Heart left ventricle (tissue), 16 donors: ENCODE measurements at regions of chr9 and their contacts with region 1.

Region 1: GRCh38 chr9:109903515-109904138 is 123.6 kb downstream of the PALM2AKAP2 start:
- DNase-seq: peak in 4 of 5 donors; percentile 47 to 64 (median 60)
- ATAC-seq: peak; percentile 24 to 66 (median 42)
- H3K4me3 ChIP-seq: no peak overlapping the region
- H3K27ac ChIP-seq: peak overlapping the region in 1 of 12 donors; percentile 3
- H3K4me1 ChIP-seq: peaks cover 9 to 68% (median 29%) of the 10 kb centered on the region in 12 donors
- H3K27me3 ChIP-seq: no peaks in the 10 kb centered on the region
- CTCF ChIP-seq: peak; percentile 63 to 90 (median 82)
- POLR2A ChIP-seq: no peak

Region 2: DNA sequence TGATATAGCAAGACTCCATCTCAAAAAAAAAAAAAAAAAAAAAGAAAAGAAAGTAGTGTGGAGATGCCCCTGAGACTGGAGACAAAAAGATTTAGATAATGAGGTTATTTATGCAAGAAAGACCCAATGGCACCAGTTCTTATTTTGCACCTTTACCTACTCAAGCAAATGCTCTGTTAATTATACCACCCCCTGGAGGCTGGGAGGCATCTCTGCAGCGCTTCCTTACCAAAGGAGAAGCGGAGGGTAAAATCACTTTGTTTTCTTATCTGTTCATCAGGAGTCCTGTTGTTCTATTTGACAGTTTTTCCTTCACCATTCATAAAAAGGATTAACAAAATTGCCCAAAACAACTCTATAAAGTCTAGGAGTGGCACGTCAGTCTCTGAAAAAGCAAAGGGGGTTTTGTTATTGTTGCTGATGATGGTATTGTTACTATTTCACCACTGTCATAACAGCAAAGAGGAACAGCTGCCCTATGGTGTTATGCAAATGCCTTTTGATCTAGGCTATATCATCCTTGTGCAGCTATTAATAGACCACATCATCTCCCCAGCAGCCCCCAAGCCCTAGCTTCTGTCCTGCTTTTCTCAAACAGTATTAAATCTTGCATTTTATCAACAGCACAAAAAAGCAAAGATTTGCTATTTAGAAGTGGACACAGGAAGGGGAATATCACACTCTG is 50.3 kb after region 1 on chr9:
- intact Hi-C with region 1: loop called in 1 of 10 experiments (anchors 5 kb)
- DNase-seq: no peak
- ATAC-seq: no peak
- H3K4me3 ChIP-seq: no peak overlapping the region
- H3K27ac ChIP-seq: no peak overlapping the region
- H3K4me1 ChIP-seq: peaks cover 0 to 25% (median 9%) of the 10 kb centered on the region in 12 donors
- H3K27me3 ChIP-seq: no peaks in the 10 kb centered on the region
- CTCF ChIP-seq: peak in 3 of 12 donors; percentile 11 to 23 (median 17)
- POLR2A ChIP-seq: no peak

Region 3: DNA sequence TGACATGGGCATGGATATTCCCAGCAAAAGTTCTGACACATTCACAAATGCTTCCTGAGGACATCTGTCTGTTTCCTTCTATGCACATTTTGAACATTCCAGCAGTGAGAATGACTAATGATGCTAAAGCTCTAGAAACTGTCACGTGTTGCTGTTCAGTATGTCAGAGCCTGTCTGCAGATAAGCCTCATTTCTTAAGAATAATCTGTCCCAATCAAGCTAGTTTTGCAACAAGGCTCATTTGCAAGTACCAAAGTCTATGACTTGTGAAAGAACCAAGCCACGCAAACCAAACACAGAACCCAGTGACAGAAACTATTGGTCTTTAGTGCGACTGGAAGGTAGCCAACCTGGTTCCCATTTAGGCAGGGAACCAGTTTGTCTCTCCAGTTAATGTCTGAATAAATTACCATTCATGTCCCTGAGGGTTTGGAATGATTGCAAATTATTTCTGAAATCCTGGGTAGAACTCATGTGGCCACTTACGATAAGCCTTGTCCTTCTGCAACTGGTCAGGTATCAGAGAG is 125.9 kb after region 1 on chr9:
- intact Hi-C with region 1: no loop called
- DNase-seq: no peak
- ATAC-seq: peak; percentile 31 to 84 (median 70)
- H3K4me3 ChIP-seq: no peak overlapping the region
- H3K27ac ChIP-seq: peak overlapping the region in 9 of 12 donors; percentile 0 to 80 (median 48)
- H3K4me1 ChIP-seq: peaks cover 7 to 51% (median 39%) of the 10 kb centered on the region in 12 donors
- H3K27me3 ChIP-seq: no peaks in the 10 kb centered on the region
- CTCF ChIP-seq: no peak
- POLR2A ChIP-seq: no peak

Region 4: GRCh38 chr9:110217656-110218099 is 314.1 kb after region 1 on chr9:
- intact Hi-C with region 1: loop called (anchors 2 to 10 kb)
- DNase-seq: no peak
- ATAC-seq: no peak
- H3K4me3 ChIP-seq: no peak overlapping the region
- H3K27ac ChIP-seq: no peak overlapping the region
- H3K4me1 ChIP-seq: peaks cover 0 to 5% (median 0%) of the 10 kb centered on the region in 12 donors
- H3K27me3 ChIP-seq: no peaks in the 10 kb centered on the region
- CTCF ChIP-seq: peak; percentile 73 to 90 (median 81)
- POLR2A ChIP-seq: no peak